ENCODE measurements at regions of chr17 and their contacts with region 1.

Region 1: DNA sequence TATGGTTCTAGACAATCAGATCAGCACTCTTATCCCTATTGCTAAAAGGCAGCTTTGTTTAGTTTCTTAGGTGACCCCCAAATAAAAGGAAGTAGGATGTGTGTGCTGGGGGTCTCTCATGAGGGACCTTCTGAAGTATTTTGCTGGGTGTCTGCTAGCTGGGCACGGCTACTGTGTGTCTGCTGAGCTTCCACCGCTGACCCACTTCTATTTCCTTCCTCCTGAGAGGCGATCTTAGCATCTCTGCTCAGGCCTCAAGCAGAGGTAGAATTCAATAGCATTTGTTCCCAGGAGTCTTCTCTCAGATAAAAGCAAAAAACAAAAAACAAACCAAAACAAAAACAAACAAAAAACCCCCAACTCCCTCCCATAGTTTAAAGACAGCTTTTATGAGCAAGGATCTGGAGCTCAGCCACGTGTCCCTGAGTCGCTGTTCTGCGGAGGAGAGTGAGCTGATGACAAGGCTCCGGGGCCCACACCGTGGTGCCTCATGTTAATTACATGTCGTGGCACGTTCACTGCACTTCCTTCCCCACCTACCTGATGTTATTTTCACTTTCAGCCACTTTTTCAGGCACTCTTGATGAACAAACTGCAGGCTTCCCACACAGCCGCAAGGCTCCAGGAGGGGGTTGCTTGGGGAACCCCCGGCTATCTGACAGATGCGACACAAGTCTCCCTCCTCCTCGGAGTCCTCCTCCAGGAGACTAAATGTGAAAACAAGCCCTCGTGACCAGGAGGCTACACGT is 83.5 kb downstream of the MARCHF10 start:
- DNase-seq: peak; percentile 43 to 89 (median 54)
- ATAC-seq: peak; percentile 96
- H3K4me3 ChIP-seq: peak overlapping the region; percentile 42
- H3K4me3 Mint-ChIP-seq: peak overlapping the region; percentile 80
- H3K27ac ChIP-seq: peak overlapping the region; percentile 8 to 87
- H3K27ac Mint-ChIP-seq: peak overlapping the region; percentile 91
- H3K4me1 ChIP-seq: peaks cover 26% of the 10 kb centered on the region
- H3K4me1 Mint-ChIP-seq: peaks cover 28% of the 10 kb centered on the region
- H3K27me3 ChIP-seq: no peaks in the 10 kb centered on the region
- H3K27me3 Mint-ChIP-seq: no peaks in the 10 kb centered on the region
- CTCF ChIP-seq: no peak

Region 2: GRCh38 chr17:62627219-62627910 is 97.2 kb before region 1 on chr17 and contains the start of gene MRC2:
- CTCF ChIA-PET with region 1: no interaction called
- POLR2A ChIA-PET with region 1: no interaction called
- intact Hi-C with region 1: no loop called
- DNase-seq: peak in 5 of 14 experiments; percentile 12 to 41 (median 16)
- ATAC-seq: peak; percentile 50
- H3K4me3 ChIP-seq: peak within 1 kb of the TSS; percentile 55
- H3K4me3 Mint-ChIP-seq: peak within 1 kb of the TSS; percentile 83
- H3K27ac ChIP-seq: no peak within 1 kb of the TSS
- H3K27ac Mint-ChIP-seq: no peak within 1 kb of the TSS
- H3K4me1 ChIP-seq: peaks cover 20% of the 10 kb centered on the region
- H3K4me1 Mint-ChIP-seq: peaks cover 16% of the 10 kb centered on the region
- H3K27me3 ChIP-seq: peaks cover 2 to 13% of the 10 kb centered on the region in 2 experiments
- H3K27me3 Mint-ChIP-seq: peaks cover 4% of the 10 kb centered on the region
- CTCF ChIP-seq: no peak
- total RNA-seq, gene MRC2: 3.8 to 5.1 TPM

Region 3: DNA sequence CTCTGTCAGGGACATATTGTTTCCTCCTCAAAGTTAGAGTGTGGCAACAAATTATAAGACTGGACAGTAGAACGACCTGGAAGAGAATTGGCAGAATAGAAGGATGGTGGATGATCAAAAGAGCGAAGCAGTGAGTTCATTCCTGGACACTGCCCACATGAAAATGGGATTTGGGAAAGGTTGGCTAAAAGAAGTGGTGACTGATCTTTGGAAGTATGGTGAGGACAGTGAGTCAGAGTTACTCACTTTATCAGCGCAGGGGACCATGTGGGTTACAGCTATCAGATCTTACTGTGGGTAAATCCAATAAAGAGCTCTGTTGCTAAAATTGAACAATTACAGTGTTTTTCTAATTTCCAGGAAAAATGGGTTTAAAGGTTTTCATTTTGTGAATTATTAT is 238.7 kb after region 1 on chr17:
- CTCF ChIA-PET with region 1: no interaction called
- POLR2A ChIA-PET with region 1: interaction called, 17 read pairs
- intact Hi-C with region 1: loop called (anchors 1 to 5 kb)
- DNase-seq: no peak
- ATAC-seq: no peak
- H3K4me3 ChIP-seq: no peak overlapping the region
- H3K4me3 Mint-ChIP-seq: peak overlapping the region; percentile 35
- H3K27ac ChIP-seq: no peak overlapping the region
- H3K27ac Mint-ChIP-seq: no peak overlapping the region
- H3K4me1 ChIP-seq: peaks cover 16% of the 10 kb centered on the region
- H3K4me1 Mint-ChIP-seq: peaks cover 24% of the 10 kb centered on the region
- H3K27me3 ChIP-seq: no peaks in the 10 kb centered on the region
- H3K27me3 Mint-ChIP-seq: no peaks in the 10 kb centered on the region
- CTCF ChIP-seq: no peak

Measured in CD4-positive, alpha-beta T cell (primary cell).